Uterus (tissue), 4 donors: ENCODE measurements at regions of chrX and their contacts with region 1.

Region 1: DNA sequence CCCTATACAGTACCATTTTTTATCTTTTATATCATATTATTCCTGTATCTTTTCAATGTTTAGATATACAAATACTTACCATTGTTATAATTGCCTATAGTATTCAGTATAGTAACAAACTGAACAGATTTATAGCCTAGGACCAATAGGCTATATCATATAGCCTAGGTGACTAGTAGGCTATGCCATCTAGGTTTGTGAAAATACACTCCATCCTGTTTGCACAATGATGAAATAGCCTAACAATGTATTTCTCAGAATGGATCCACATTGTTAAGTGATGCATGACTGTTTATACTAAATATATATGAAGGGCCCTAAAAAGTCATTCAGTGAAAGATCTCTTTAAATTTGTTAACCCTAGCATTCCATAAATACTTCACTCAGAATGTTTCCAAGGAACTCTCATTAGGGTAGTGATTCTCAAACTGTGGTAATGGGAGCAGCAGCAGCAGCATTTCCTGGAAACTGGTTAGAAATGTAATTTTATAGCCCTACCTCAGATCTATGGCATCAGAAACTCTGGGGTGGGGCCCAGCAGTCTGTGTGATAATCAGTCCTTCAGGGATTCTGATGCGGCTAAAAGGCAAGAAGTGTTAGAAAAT is 74.8 kb downstream of the PRRG1 start:
- DNase-seq: no peak
- H3K4me3 ChIP-seq: no peak overlapping the region
- H3K27ac ChIP-seq: no peak overlapping the region
- H3K4me1 ChIP-seq: no peaks in the 10 kb centered on the region
- H3K27me3 ChIP-seq: no peaks in the 10 kb centered on the region
- CTCF ChIP-seq: no peak
- POLR2A ChIP-seq: no peak

Region 2: DNA sequence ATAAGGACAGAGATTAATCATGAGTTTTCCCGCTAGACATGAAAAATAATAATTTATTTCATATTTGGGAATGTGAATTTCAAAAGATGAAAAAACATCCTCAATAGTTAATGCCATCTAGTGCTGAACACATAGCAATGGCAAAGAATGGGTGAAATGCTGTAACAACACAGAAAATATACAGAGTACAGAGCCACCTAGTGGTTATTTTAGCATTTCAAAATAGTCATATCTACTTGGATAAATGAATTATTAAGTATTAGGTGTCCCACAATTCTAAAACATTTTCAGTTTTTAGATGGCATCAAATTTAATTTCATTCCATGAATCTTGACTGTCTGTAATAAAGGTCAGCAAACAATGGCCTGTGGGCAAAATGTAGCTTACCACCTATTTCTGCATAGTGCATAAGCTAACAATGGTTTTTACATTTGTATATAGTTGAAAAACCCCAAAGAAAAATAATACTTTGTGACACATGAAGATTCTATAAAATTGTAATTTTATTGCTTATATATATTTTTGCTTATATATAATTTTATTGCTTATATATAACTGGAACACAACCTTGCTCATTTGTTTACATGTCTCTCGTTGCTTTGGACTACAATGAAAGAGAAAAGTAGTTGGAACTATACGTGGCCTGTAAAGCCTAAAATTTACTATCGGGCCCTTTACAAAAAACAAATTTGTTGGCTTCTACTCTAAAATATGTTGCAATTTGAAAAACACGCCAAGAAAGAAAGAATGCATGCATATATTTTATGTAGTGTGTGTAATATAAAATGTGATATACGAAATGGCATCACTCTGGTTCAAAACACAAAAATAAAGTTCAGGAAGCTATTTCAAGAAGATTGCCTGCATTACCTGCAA is 514.9 kb before region 1 on chrX:
- intact Hi-C with region 1: loop called (anchors 10 kb)
- DNase-seq: no peak
- H3K4me3 ChIP-seq: no peak overlapping the region
- H3K27ac ChIP-seq: no peak overlapping the region
- H3K4me1 ChIP-seq: no peaks in the 10 kb centered on the region
- H3K27me3 ChIP-seq: peaks cover 0 to 4% of the 10 kb centered on the region in 2 donors
- CTCF ChIP-seq: peak in 1 of 4 experiments; percentile 20
- POLR2A ChIP-seq: no peak

Region 3: DNA sequence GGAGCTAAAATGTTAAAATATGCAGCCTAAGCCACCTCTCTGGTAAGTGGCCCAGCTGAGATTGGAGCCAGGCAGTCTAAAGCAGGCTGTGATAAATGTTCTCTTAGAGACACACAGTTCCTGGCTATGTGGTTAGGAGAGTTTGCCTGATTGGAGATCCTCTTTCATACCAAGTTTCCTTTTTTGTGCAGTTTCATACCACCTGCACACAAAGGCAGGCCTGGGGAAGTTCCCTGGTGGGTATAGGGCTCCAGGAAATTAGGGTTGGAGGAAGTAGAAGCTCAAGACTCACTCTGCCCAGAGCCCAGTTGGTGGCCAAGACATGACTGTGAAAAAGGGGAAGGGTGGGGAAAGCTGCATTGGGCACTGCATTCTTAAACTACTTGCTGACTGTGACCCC is 372.8 kb after region 1 on chrX:
- intact Hi-C with region 1: no loop called
- DNase-seq: no peak
- H3K4me3 ChIP-seq: no peak overlapping the region
- H3K27ac ChIP-seq: no peak overlapping the region
- H3K4me1 ChIP-seq: no peaks in the 10 kb centered on the region
- H3K27me3 ChIP-seq: no peaks in the 10 kb centered on the region
- CTCF ChIP-seq: no peak
- POLR2A ChIP-seq: no peak